Naive thymus-derived CD8-positive, alpha-beta T cell (primary cell): ENCODE measurements at regions of chr1 and their contacts with region 1.

Region 1: GRCh38 chr1:36149237-36149972 is at the start of gene TRAPPC3:
- DNase-seq: peak; percentile 97 to 99 (median 99)
- ATAC-seq: peak; percentile 91 to 95
- H3K4me3 Mint-ChIP-seq: peak within 1 kb of the TSS; percentile 93 to 100 (median 98)
- H3K27ac Mint-ChIP-seq: peak within 1 kb of the TSS; percentile 94 to 100 (median 99)
- H3K4me1 Mint-ChIP-seq: peaks cover 29 to 81% (median 74%) of the 10 kb centered on the region in 4 donors
- H3K27me3 Mint-ChIP-seq: no peaks in the 10 kb centered on the region
- polyA plus RNA-seq, gene TRAPPC3: 99.9 to 115 (median 110) TPM

Region 2: GRCh38 chr1:36034692-36035091 is 114.7 kb before region 1 on chr1:
- POLR2A ChIA-PET with region 1: no interaction called
- DNase-seq: no peak
- ATAC-seq: no peak
- H3K4me3 Mint-ChIP-seq: no peak overlapping the region
- H3K27ac Mint-ChIP-seq: peak overlapping the region in 1 of 10 donors; percentile 59
- H3K4me1 Mint-ChIP-seq: no peaks in the 10 kb centered on the region
- H3K27me3 Mint-ChIP-seq: no peaks in the 10 kb centered on the region

Region 3: GRCh38 chr1:36088575-36089443 is 60.6 kb before region 1 on chr1 and contains the start of gene ADPRS:
- POLR2A ChIA-PET with region 1: interaction called, 10 read pairs
- DNase-seq: peak; percentile 83 to 94 (median 89)
- ATAC-seq: peak; percentile 90 to 92
- H3K4me3 Mint-ChIP-seq: peak within 1 kb of the TSS; percentile 76 to 94 (median 90)
- H3K27ac Mint-ChIP-seq: peak within 1 kb of the TSS; percentile 83 to 96 (median 92)
- H3K4me1 Mint-ChIP-seq: peaks cover 6 to 41% (median 28%) of the 10 kb centered on the region in 4 donors
- H3K27me3 Mint-ChIP-seq: peaks cover 0 to 30% (median 4%) of the 10 kb centered on the region in 5 donors
- polyA plus RNA-seq, gene ADPRS: 9.9 to 24.8 (median 11.5) TPM

Region 4: GRCh38 chr1:36109041-36109679 is 40.2 kb before region 1 on chr1:
- POLR2A ChIA-PET with region 1: interaction called, 18 read pairs
- DNase-seq: peak; percentile 34 to 79 (median 60)
- ATAC-seq: peak; percentile 99
- H3K4me3 Mint-ChIP-seq: peak overlapping the region; percentile 36 to 88 (median 75)
- H3K27ac Mint-ChIP-seq: peak overlapping the region; percentile 89 to 97 (median 94)
- H3K4me1 Mint-ChIP-seq: peaks cover 26 to 55% (median 43%) of the 10 kb centered on the region in 4 donors
- H3K27me3 Mint-ChIP-seq: no peaks in the 10 kb centered on the region

Region 5: DNA sequence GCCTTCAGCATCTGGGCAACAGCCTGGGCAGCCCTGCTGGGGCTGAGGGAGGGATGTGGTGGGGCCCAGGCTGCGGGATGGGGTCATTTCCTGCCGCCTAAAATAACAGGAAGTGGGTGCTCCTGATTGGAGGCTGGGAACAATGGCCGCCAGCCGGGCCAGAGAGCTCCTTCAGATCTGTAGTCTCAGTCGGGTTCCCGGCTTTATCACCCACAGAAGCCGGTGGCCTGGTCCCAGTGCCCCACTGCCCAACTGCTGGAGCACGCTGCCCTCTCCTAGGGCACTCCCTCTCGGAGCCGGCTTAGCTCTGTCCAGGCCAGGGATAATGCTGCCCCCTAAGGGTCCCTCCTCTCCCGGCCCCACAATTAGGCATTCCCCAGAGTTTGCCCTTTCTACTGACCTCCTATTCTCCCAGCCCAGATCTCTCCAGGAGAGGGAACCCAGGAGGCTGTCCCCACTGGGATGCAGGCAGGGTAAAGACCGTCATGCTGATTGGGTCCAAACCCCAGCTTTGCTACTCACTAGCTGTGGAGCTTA is 11.6 kb after region 1 on chr1:
- POLR2A ChIA-PET with region 1: interaction called, 173 read pairs
- DNase-seq: peak; percentile 38 to 75 (median 57)
- ATAC-seq: peak; percentile 34 to 36
- H3K4me3 Mint-ChIP-seq: peak overlapping the region; percentile 76 to 95 (median 90)
- H3K27ac Mint-ChIP-seq: peak overlapping the region; percentile 92 to 99 (median 98)
- H3K4me1 Mint-ChIP-seq: peaks cover 52 to 79% (median 76%) of the 10 kb centered on the region in 4 donors
- H3K27me3 Mint-ChIP-seq: no peaks in the 10 kb centered on the region

Region 6: GRCh38 chr1:36187800-36188593 is 38.6 kb after region 1 on chr1:
- POLR2A ChIA-PET with region 1: interaction called, 227 read pairs
- DNase-seq: peak; percentile 57 to 92 (median 80)
- ATAC-seq: peak; percentile 98 to 99
- H3K4me3 Mint-ChIP-seq: no peak overlapping the region
- H3K27ac Mint-ChIP-seq: peak overlapping the region; percentile 57 to 91 (median 74)
- H3K4me1 Mint-ChIP-seq: peaks cover 3 to 13% (median 8%) of the 10 kb centered on the region in 4 donors
- H3K27me3 Mint-ChIP-seq: no peaks in the 10 kb centered on the region

Region 7: GRCh38 chr1:36258962-36259349 is 109.6 kb after region 1 on chr1:
- POLR2A ChIA-PET with region 1: no interaction called
- DNase-seq: no peak
- ATAC-seq: no peak
- H3K4me3 Mint-ChIP-seq: no peak overlapping the region
- H3K27ac Mint-ChIP-seq: peak overlapping the region in 3 of 10 donors; percentile 10 to 55 (median 12)
- H3K4me1 Mint-ChIP-seq: peaks cover 14 to 50% (median 43%) of the 10 kb centered on the region in 4 donors
- H3K27me3 Mint-ChIP-seq: no peaks in the 10 kb centered on the region

Region 8: GRCh38 chr1:36285448-36286101 is 136.2 kb after region 1 on chr1:
- POLR2A ChIA-PET with region 1: interaction called, 18 read pairs
- DNase-seq: peak; percentile 35 to 85 (median 68)
- ATAC-seq: peak; percentile 95 to 98
- H3K4me3 Mint-ChIP-seq: no peak overlapping the region
- H3K27ac Mint-ChIP-seq: peak overlapping the region in 9 of 10 donors; percentile 44 to 85 (median 69)
- H3K4me1 Mint-ChIP-seq: peaks cover 2 to 23% (median 8%) of the 10 kb centered on the region in 4 donors
- H3K27me3 Mint-ChIP-seq: no peaks in the 10 kb centered on the region

Region 9: GRCh38 chr1:36377791-36378492 is 228.5 kb after region 1 on chr1:
- POLR2A ChIA-PET with region 1: no interaction called
- DNase-seq: no peak
- ATAC-seq: peak in 1 of 2 donors; percentile 42
- H3K4me3 Mint-ChIP-seq: peak overlapping the region in 2 of 10 donors; percentile 19 to 47
- H3K27ac Mint-ChIP-seq: peak overlapping the region; percentile 75 to 94 (median 81)
- H3K4me1 Mint-ChIP-seq: peaks cover 37 to 91% (median 76%) of the 10 kb centered on the region in 4 donors
- H3K27me3 Mint-ChIP-seq: no peaks in the 10 kb centered on the region